CD8-positive, alpha-beta T cell (primary cell): ENCODE measurements at regions of chr3 and their contacts with region 1.

Region 1: DNA sequence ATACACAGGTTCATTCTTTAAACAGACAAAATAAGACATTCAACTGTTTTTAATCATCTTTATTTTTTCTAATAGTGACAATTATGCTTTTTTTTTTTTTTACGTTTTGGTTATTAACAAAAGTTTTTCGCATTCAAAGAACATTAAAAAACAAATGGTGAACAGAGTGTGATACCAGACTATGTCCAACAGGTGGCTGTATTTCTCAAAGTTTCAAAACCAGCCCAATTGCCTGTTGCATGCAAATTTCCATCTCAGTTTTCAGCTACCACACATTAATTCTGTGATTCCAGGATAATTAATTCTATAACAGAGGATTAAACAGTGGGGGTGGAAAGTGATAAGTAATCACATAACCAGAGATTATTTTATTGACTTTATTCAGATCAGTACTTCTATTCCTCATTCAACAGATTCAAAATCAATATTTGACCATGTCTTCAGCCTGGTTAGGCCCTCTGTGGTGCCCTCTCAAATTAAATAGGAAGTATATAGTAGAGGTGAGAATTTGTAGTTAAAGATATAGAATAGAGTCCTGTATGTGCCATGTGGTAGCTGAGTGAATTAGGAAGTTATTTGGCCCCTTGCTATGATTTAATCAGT is 122.2 kb upstream of the DCBLD2 start:
- DNase-seq: peak in 1 of 9 experiments; percentile 4
- ATAC-seq: no peak
- H3K4me3 ChIP-seq: no peak overlapping the region
- H3K4me3 Mint-ChIP-seq: no peak overlapping the region
- H3K27ac ChIP-seq: no peak overlapping the region
- H3K27ac Mint-ChIP-seq: no peak overlapping the region
- H3K4me1 ChIP-seq: no peaks in the 10 kb centered on the region
- H3K4me1 Mint-ChIP-seq: no peaks in the 10 kb centered on the region
- H3K27me3 ChIP-seq: no peaks in the 10 kb centered on the region
- H3K27me3 Mint-ChIP-seq: no peaks in the 10 kb centered on the region
- CTCF ChIP-seq: peak; percentile 63

Region 2: DNA sequence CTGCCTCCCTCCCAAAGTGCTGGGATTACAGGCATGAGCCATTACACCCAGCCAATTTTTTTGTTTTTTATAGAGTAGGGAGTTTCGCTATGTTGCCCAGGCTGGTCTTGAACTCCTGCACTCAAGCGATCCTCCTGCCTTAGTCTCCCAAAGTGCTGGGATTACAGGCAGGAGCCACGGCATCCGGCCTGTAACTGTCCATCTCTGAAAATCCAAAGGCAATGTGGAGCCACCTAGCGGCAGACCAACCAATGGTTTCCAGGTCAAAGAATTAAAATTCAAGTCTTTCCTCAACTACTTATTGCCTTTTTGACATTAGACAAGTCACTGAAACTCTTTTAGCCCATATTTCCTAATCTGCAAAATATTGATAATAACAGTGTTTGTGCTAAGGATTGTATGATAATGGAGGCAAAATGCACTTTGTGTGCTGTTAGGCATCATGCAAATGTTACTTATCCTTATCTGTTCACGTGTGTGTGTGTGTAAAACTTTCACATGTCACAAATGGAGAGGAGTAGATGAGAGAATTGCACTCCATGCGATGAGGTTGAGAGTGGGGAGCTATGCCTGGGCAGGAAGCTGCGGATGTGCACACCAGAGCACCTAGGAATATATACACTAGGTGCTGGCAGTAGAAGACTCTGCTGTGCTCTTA is 663.4 kb after region 1 on chr3:
- CTCF ChIA-PET with region 1: no interaction called
- POLR2A ChIA-PET with region 1: no interaction called
- intact Hi-C with region 1: loop called in 1 of 2 experiments (anchors 10 kb)
- DNase-seq: peak in 4 of 9 experiments; percentile 5 to 16 (median 8)
- ATAC-seq: no peak
- H3K4me3 ChIP-seq: no peak overlapping the region
- H3K4me3 Mint-ChIP-seq: no peak overlapping the region
- H3K27ac ChIP-seq: no peak overlapping the region
- H3K27ac Mint-ChIP-seq: no peak overlapping the region
- H3K4me1 ChIP-seq: no peaks in the 10 kb centered on the region
- H3K4me1 Mint-ChIP-seq: no peaks in the 10 kb centered on the region
- H3K27me3 ChIP-seq: no peaks in the 10 kb centered on the region
- H3K27me3 Mint-ChIP-seq: peaks cover 15% of the 10 kb centered on the region
- CTCF ChIP-seq: no peak

Region 3: GRCh38 chr3:99753268-99753975 is 729.7 kb after region 1 on chr3:
- CTCF ChIA-PET with region 1: interaction called, 3 read pairs
- POLR2A ChIA-PET with region 1: no interaction called
- intact Hi-C with region 1: loop called in 1 of 2 experiments (anchors 10 kb)
- DNase-seq: peak in 2 of 9 experiments; percentile 29 to 49
- ATAC-seq: peak; percentile 48
- H3K4me3 ChIP-seq: no peak overlapping the region
- H3K4me3 Mint-ChIP-seq: no peak overlapping the region
- H3K27ac ChIP-seq: no peak overlapping the region
- H3K27ac Mint-ChIP-seq: no peak overlapping the region
- H3K4me1 ChIP-seq: no peaks in the 10 kb centered on the region
- H3K4me1 Mint-ChIP-seq: peaks cover 2% of the 10 kb centered on the region
- H3K27me3 ChIP-seq: no peaks in the 10 kb centered on the region
- H3K27me3 Mint-ChIP-seq: peaks cover 23% of the 10 kb centered on the region
- CTCF ChIP-seq: peak; percentile 40

Region 4: GRCh38 chr3:99760629-99761028 is 736.9 kb after region 1 on chr3:
- CTCF ChIA-PET with region 1: no interaction called
- POLR2A ChIA-PET with region 1: no interaction called
- intact Hi-C with region 1: loop called (anchors 5 to 10 kb)
- DNase-seq: no peak
- ATAC-seq: no peak
- H3K4me3 ChIP-seq: no peak overlapping the region
- H3K4me3 Mint-ChIP-seq: no peak overlapping the region
- H3K27ac ChIP-seq: no peak overlapping the region
- H3K27ac Mint-ChIP-seq: no peak overlapping the region
- H3K4me1 ChIP-seq: no peaks in the 10 kb centered on the region
- H3K4me1 Mint-ChIP-seq: no peaks in the 10 kb centered on the region
- H3K27me3 ChIP-seq: no peaks in the 10 kb centered on the region
- H3K27me3 Mint-ChIP-seq: peaks cover 6% of the 10 kb centered on the region
- CTCF ChIP-seq: no peak